Activated T-helper 2 cell treated with anti-CD3 and anti-CD28 coated beads, Interferon-gamma antibody, Interleukin-2, Interleukin-4, amounts not matched to agents 10 μg/mL and 5 μg/mL and 100 μg/mL, durations not matched to agents 14 hours and 24 hours and 36 hours (primary cell): ENCODE measurements at regions of chrX and their contacts with region 1.

Region 1: GRCh38 chrX:70196961-70197805 is 19.9 kb downstream of the DGAT2L6 start:
- DNase-seq: peak; percentile 25
- H3K4me3 Mint-ChIP-seq: no peak overlapping the region
- H3K27ac Mint-ChIP-seq: no peak overlapping the region
- H3K4me1 Mint-ChIP-seq: peaks cover 5% of the 10 kb centered on the region
- H3K27me3 Mint-ChIP-seq: peaks cover 3% of the 10 kb centered on the region

Region 2: GRCh38 chrX:70133303-70134115 is 63.7 kb before region 1 on chrX and contains the start of gene IGBP1:
- intact Hi-C with region 1: no loop called
- DNase-seq: peak; percentile 76
- H3K4me3 Mint-ChIP-seq: peak within 1 kb of the TSS; percentile 98
- H3K27ac Mint-ChIP-seq: peak within 1 kb of the TSS; percentile 91
- H3K4me1 Mint-ChIP-seq: peaks cover 20% of the 10 kb centered on the region
- H3K27me3 Mint-ChIP-seq: no peaks in the 10 kb centered on the region
- total RNA-seq, gene IGBP1: 33.0 and 33.6 TPM in 2 replicates

Region 3: GRCh38 chrX:70231666-70232065 is 34.5 kb after region 1 on chrX:
- intact Hi-C with region 1: loop called (anchors 1 kb)
- DNase-seq: no peak
- H3K4me3 Mint-ChIP-seq: no peak overlapping the region
- H3K27ac Mint-ChIP-seq: peak overlapping the region; percentile 59
- H3K4me1 Mint-ChIP-seq: peaks cover 17% of the 10 kb centered on the region
- H3K27me3 Mint-ChIP-seq: no peaks in the 10 kb centered on the region

Region 4: GRCh38 chrX:70262952-70263567 is 65.9 kb after region 1 on chrX:
- intact Hi-C with region 1: loop called (anchors 1 kb)
- DNase-seq: peak; percentile 9
- H3K4me3 Mint-ChIP-seq: no peak overlapping the region
- H3K27ac Mint-ChIP-seq: no peak overlapping the region
- H3K4me1 Mint-ChIP-seq: no peaks in the 10 kb centered on the region
- H3K27me3 Mint-ChIP-seq: no peaks in the 10 kb centered on the region

Region 5: DNA sequence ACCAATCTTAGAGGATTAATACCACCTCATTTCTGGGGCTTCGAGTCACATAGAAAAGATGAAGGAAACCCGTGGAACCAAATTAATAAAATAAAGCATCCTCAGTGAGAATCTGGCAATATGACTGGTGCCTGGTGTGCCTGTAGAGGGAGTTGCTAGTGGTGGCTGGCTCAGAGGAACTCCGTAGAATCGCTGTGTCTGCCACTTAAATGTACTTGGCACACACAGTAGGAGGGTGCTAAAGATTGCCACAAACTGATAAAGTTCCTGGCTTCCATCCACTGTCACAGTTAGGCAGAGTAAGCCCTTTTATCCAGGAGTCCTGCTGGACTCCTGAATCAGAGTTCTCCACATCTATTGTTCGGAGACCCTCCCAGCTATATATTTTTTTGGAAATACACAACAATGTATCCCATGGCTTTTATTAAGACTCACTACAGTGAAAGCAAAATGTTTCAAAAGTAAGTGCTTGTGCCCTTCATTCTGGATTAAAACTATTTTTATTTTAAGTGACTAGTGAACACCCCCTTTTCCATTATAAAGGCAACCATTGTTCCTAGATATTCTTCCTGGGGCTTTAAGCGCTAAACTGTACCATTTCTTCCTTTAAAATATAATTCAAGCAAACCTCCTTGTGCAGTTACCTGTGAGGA is 149.4 kb after region 1 on chrX:
- intact Hi-C with region 1: no loop called
- DNase-seq: no peak
- H3K4me3 Mint-ChIP-seq: no peak overlapping the region
- H3K27ac Mint-ChIP-seq: no peak overlapping the region
- H3K4me1 Mint-ChIP-seq: no peaks in the 10 kb centered on the region
- H3K27me3 Mint-ChIP-seq: no peaks in the 10 kb centered on the region